ENCODE measurements at regions of chr7 and their contacts with region 1.

Region 1: DNA sequence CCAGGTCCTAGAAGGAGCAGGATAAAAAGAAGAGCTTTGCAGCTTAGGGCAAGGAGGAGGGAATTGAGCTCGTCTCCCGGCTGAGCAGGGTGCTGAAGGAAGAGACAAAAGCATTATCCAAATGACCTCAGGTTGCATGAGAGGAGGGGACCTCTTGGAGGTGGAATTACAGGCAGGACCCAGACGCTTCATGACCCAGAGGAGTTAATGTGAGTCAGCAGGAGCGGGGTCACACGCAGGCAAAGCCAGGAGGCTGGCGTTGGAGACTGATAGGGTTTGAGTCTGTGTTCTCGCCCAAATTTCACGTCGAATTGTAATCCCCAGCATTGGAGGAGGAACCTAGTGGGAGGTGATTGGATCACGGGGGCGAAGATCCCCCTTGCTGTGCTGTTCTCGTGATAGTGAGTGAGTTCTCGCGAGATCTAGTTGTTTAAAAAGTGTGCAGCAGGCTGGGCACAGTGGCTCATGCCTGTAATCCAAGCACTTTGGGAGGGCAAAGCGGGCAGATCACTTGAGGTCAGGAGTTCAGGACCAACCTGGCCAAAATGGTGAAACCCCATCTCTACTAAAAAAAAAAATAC is 63.7 kb upstream of the AUTS2 start:
- DNase-seq: no peak
- H3K4me3 ChIP-seq: no peak overlapping the region
- H3K27ac ChIP-seq: no peak overlapping the region
- H3K4me1 ChIP-seq: no peaks in the 10 kb centered on the region
- H3K27me3 ChIP-seq: no peaks in the 10 kb centered on the region
- CTCF ChIP-seq: no peak

Region 2: GRCh38 chr7:68031180-68031946 is 1503.2 kb before region 1 on chr7:
- CTCF ChIA-PET with region 1: no interaction called
- POLR2A ChIA-PET with region 1: interaction called, 10 read pairs
- intact Hi-C with region 1: no loop called
- DNase-seq: no peak
- H3K4me3 ChIP-seq: no peak overlapping the region
- H3K27ac ChIP-seq: no peak overlapping the region
- H3K4me1 ChIP-seq: no peaks in the 10 kb centered on the region
- H3K27me3 ChIP-seq: no peaks in the 10 kb centered on the region
- CTCF ChIP-seq: no peak

Measured in A673 (cell line).